Ovary (tissue), 10 donors: ENCODE measurements at regions of chr22 and their contacts with region 1.

Region 1: DNA sequence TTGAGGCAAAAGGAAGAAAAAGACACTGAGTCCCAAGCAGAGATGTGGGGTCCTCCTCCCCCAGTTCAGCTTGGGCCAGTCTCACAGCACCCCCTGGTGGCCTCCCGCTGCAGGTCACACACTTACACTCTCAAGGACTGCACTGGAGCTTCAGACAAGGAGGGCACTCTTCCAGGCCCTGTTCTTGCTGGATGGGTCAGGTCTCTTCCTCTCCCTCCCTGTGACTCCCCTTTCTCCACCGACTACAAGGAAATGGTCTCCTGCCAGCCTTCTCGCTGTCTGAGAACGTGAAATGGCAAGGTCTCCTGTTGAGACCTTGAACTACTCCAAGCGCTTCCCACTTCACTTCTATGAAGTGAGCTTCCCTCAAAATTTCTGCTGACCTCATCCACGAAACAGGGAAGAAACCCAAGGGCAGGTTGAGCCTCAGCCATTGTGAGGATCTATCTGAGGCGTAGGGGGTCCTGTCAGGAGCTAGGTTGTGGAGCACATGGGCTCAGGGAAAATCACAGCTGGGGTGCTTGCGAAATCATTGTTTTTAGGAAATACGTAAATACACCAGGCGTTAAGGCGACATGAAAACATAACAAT is 11.2 kb upstream of the IGLL1 start:
- DNase-seq: peak; percentile 90 to 95 (median 92)
- H3K4me3 ChIP-seq: no peak overlapping the region
- H3K27ac ChIP-seq: peak overlapping the region in 1 of 2 donors; percentile 90
- H3K4me1 ChIP-seq: peaks cover 7% of the 10 kb centered on the region
- H3K27me3 ChIP-seq: no peaks in the 10 kb centered on the region
- CTCF ChIP-seq: peak; percentile 87 to 93 (median 91)
- EP300 ChIP-seq: no peak
- POLR2A ChIP-seq: no peak

Region 2: GRCh38 chr22:23548501-23549197 is 42.6 kb before region 1 on chr22:
- intact Hi-C with region 1: loop called in 2 of 4 experiments (anchors 2 to 10 kb)
- DNase-seq: no peak
- H3K4me3 ChIP-seq: no peak overlapping the region
- H3K27ac ChIP-seq: no peak overlapping the region
- H3K4me1 ChIP-seq: no peaks in the 10 kb centered on the region
- H3K27me3 ChIP-seq: no peaks in the 10 kb centered on the region
- CTCF ChIP-seq: no peak
- EP300 ChIP-seq: no peak
- POLR2A ChIP-seq: no peak

Region 3: GRCh38 chr22:23803001-23803819 is 211.9 kb after region 1 on chr22:
- intact Hi-C with region 1: no loop called
- DNase-seq: no peak
- H3K4me3 ChIP-seq: no peak overlapping the region
- H3K27ac ChIP-seq: no peak overlapping the region
- H3K4me1 ChIP-seq: peaks cover 2% of the 10 kb centered on the region
- H3K27me3 ChIP-seq: no peaks in the 10 kb centered on the region
- CTCF ChIP-seq: no peak
- EP300 ChIP-seq: no peak
- POLR2A ChIP-seq: no peak